Left colon (tissue), 2 donors: ENCODE measurements at regions of chr4 and their contacts with region 1.

Region 1: DNA sequence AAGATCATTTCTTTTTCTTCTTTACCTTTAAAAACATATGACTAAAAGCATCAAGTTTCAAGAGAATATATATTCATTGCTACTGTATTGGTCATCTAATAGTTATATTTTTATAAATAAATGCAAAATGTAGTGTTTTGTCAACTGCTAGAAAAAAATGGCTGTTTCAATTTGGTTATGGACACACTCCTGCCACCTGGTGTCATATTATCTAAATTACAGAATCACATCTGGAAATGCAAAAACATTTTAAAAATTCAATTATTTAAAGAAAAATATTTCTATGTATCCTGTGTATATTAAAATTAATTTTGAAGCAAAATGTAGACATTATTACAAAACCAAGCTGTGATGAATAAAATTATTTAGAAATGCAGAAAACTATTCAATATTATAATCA is 329.4 kb upstream of the PCDH18 start:
- DNase-seq: no peak
- ATAC-seq: no peak

Region 2: DNA sequence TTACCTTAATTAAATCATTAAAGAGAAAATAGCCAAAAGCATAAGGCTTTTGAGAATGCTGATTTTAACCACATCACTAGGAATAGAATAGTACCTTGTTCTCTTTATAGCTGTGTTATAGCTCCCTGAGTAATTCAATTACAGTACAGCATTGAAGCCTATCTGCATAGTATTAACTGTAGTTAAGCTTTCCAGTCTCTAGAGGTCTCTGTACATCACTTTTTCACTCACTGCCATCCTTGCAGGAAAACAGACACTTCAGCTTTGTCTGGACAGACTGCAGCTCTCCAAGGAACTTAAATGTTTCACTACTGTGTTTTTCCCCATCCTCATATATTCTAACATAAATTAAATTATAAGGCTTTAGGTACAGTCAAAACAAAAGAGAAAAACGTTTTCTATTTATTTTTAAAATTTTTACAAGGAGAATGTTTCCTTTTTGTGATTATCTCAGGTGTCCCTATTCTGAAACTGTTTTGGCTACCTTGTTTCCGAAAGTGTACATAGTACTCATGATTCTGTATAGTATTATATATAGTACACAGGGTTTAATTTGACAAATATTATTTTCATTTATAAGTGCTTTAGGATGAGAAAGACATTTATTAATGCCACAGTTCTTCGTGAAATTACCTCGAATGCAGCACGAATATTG is 737.3 kb before region 1 on chr4:
- intact Hi-C with region 1: loop called in 1 of 2 experiments (anchors 5 kb)
- DNase-seq: no peak
- ATAC-seq: peak; percentile 64

Region 3: DNA sequence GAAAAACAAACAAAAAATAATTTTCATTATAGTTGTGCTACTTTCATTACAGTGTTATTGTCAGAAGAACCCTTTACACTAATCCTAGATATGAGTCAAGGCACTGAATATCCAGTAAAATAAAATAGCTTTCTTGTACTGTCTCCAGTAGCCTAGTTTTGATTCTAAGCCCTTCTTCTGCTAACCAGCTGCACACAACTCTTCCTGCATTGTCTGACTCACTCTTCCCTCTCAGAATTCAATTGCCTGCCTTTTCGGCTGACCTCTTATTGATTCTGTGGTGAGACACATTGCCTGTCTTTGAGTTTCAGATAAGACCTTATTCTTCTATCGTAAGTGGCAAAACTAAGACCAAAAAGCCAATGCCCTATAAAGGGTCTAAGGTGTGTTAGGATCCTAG is 302.7 kb before region 1 on chr4:
- intact Hi-C with region 1: loop called in 1 of 2 experiments (anchors 10 kb)
- DNase-seq: no peak
- ATAC-seq: no peak